Mammary epithelial cell (primary cell): ENCODE measurements at regions of chr1 and their contacts with region 1.

Region 1: DNA sequence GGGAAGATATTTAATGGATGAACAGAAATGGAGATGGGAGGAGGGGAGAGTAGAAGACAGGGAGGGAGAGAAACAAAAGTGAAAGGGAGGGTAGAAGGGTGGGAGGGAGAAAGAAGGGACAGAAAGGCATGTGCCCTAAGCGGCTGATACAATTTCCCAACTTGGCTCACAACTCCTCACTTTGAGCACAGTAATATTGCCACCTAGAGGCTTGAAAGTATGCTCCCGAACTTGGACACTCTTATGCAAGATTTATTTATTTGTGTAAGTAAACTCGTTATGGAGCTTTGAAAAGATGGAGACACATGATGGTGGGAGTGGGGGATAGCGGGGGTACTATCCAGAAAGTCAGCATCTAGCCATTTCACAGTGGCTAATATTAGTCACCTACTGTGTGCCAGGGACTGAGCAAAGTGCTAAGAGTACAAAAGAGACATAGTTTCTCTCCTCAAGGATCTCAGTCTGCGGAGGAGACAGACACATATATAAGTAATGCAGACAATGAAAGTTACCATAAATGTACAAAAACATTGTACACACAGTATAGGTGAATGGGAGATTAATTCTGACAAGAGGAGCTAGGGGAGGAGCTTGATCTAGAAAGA is 189.7 kb downstream of the SEC16B start:
- DNase-seq: peak; percentile 51
- H3K4me3 ChIP-seq: no peak overlapping the region
- H3K27ac ChIP-seq: no peak overlapping the region
- H3K4me1 ChIP-seq: no peaks in the 10 kb centered on the region
- H3K27me3 ChIP-seq: no peaks in the 10 kb centered on the region
- CTCF ChIP-seq: peak; percentile 49 to 71

Region 2: GRCh38 chr1:177103005-177103852 is 677.0 kb before region 1 on chr1:
- CTCF ChIA-PET with region 1: no interaction called
- dilution Hi-C with region 1: no loop called
- in situ Hi-C with region 1: no loop called
- intact Hi-C with region 1: no loop called
- DNase-seq: no peak
- H3K4me3 ChIP-seq: no peak overlapping the region
- H3K27ac ChIP-seq: no peak overlapping the region
- H3K4me1 ChIP-seq: no peaks in the 10 kb centered on the region
- H3K27me3 ChIP-seq: no peaks in the 10 kb centered on the region
- CTCF ChIP-seq: no peak

Region 3: GRCh38 chr1:177355595-177355994 is 424.6 kb before region 1 on chr1:
- CTCF ChIA-PET with region 1: no interaction called
- dilution Hi-C with region 1: no loop called
- in situ Hi-C with region 1: no loop called
- intact Hi-C with region 1: loop called (anchors 5 kb)
- DNase-seq: peak; percentile 41
- H3K4me3 ChIP-seq: no peak overlapping the region
- H3K27ac ChIP-seq: no peak overlapping the region
- H3K4me1 ChIP-seq: no peaks in the 10 kb centered on the region
- H3K27me3 ChIP-seq: no peaks in the 10 kb centered on the region
- CTCF ChIP-seq: peak; percentile 51 to 59

Region 4: GRCh38 chr1:177567407-177567806 is 212.8 kb before region 1 on chr1:
- CTCF ChIA-PET with region 1: interaction called, 3 read pairs
- dilution Hi-C with region 1: no loop called
- in situ Hi-C with region 1: no loop called
- intact Hi-C with region 1: loop called (anchors 2 kb)
- DNase-seq: peak; percentile 23
- H3K4me3 ChIP-seq: no peak overlapping the region
- H3K27ac ChIP-seq: no peak overlapping the region
- H3K4me1 ChIP-seq: no peaks in the 10 kb centered on the region
- H3K27me3 ChIP-seq: no peaks in the 10 kb centered on the region
- CTCF ChIP-seq: peak; percentile 55 to 73

Region 5: GRCh38 chr1:177686933-177687332 is 93.3 kb before region 1 on chr1:
- CTCF ChIA-PET with region 1: no interaction called
- dilution Hi-C with region 1: no loop called
- in situ Hi-C with region 1: no loop called
- intact Hi-C with region 1: no loop called
- DNase-seq: no peak
- H3K4me3 ChIP-seq: no peak overlapping the region
- H3K27ac ChIP-seq: no peak overlapping the region
- H3K4me1 ChIP-seq: no peaks in the 10 kb centered on the region
- H3K27me3 ChIP-seq: peaks cover 5% of the 10 kb centered on the region
- CTCF ChIP-seq: no peak

Region 6: DNA sequence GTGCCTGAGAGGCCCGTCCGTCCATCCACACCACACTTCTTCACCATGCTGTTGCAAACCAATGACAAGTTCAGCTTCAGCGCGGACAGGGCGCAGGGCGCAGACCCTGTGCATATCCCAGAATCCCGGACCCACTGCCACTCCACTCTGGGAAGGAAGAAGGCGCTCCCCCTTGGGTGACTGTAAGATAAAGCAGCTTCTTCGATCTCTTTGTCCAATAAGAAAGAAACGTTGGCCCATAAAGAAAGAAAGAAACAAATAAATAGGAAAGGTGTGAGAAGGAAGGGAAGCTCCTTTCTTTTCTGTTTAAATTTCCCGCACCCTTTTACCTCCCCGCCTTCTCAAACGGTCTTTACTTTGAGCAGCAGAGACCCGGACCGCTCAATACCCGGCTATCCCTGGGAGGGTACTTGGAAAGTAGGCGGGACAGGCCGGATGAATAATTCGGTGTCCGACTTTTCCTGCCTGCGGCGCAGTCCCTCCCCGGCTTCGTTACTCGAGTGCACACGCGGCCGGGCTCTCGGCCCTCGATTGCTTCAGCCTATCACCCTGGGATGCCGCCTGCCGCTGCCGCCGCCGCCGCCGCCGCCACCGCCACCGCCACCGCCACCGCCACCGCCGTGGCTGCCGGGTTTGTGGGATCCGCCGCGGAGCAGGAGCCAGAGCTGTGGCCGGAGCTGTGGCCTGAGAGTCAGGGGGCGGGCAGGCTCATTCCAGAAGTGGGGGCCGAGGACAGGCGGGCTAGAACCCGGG is 313.2 kb after region 1 on chr1:
- CTCF ChIA-PET with region 1: no interaction called
- dilution Hi-C with region 1: no loop called
- in situ Hi-C with region 1: no loop called
- intact Hi-C with region 1: no loop called
- DNase-seq: peak; percentile 95
- H3K4me3 ChIP-seq: peak overlapping the region; percentile 85 to 99 (median 87)
- H3K27ac ChIP-seq: peak overlapping the region; percentile 79
- H3K4me1 ChIP-seq: peaks cover 31% of the 10 kb centered on the region
- H3K27me3 ChIP-seq: no peaks in the 10 kb centered on the region
- CTCF ChIP-seq: peak in 1 of 2 donors; percentile 18